ENCODE measurements at regions of chr11 and their contacts with region 1.

Region 1: GRCh38 chr11:115958089-115959000 is 454.1 kb upstream of the CADM1 start:
- DNase-seq: no peak
- ATAC-seq: no peak
- H3K4me3 ChIP-seq: no peak overlapping the region
- H3K27ac ChIP-seq: no peak overlapping the region
- H3K4me1 ChIP-seq: no peaks in the 10 kb centered on the region
- H3K27me3 ChIP-seq: no peaks in the 10 kb centered on the region
- CTCF ChIP-seq: no peak

Region 2: DNA sequence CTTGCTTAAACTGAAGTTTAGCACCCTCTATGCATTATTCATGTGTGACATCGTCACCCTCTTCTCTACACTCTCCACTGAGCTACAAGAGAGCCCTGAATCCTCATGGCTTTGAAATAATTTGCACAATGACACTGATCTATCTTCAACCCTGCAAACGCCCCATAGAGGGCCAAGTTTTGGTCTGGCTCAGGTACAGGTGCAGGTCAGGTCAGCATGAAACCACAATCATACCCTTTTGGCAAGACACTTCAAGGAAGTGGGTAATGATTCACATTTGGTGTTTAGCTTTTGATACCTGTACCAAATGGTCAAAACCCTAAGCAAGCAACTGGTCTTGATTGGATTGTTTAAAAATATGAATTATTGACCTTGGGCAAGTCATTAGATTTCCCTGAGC is 331.9 kb before region 1 on chr11:
- CTCF ChIA-PET with region 1: no interaction called
- POLR2A ChIA-PET with region 1: interaction called, 13 read pairs
- in situ Hi-C with region 1: no loop called
- intact Hi-C with region 1: no loop called
- DNase-seq: no peak
- ATAC-seq: no peak
- H3K4me3 ChIP-seq: no peak overlapping the region
- H3K27ac ChIP-seq: no peak overlapping the region
- H3K4me1 ChIP-seq: no peaks in the 10 kb centered on the region
- H3K27me3 ChIP-seq: no peaks in the 10 kb centered on the region; the same call in 1 of the 2 replicates
- CTCF ChIP-seq: no peak

Region 3: GRCh38 chr11:115896084-115896483 is 62.3 kb before region 1 on chr11:
- CTCF ChIA-PET with region 1: no interaction called
- POLR2A ChIA-PET with region 1: no interaction called
- in situ Hi-C with region 1: no loop called
- intact Hi-C with region 1: no loop called
- DNase-seq: no peak
- ATAC-seq: no peak
- H3K4me3 ChIP-seq: no peak overlapping the region
- H3K27ac ChIP-seq: no peak overlapping the region
- H3K4me1 ChIP-seq: no peaks in the 10 kb centered on the region
- H3K27me3 ChIP-seq: no peaks in the 10 kb centered on the region
- CTCF ChIP-seq: no peak

Region 4: DNA sequence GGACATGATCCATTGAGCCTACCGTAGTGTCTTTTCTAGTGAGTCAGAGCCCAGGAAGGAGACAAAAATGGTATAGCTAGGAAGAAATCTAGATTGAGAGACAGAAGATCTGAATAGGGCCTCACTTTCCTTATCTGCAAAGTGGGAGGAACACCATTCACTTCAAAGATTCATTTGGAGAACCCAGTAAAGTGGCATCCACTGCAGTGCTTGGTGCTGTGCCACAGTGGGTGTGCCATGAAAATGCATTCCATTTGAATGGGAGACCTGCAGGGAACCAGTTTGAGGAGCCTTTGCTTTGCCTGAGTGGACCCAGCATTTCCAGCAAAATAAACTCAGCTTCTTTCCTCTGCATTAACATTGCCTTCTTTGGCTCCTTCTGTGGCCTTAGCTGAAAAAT is 16.4 kb after region 1 on chr11:
- CTCF ChIA-PET with region 1: no interaction called
- POLR2A ChIA-PET with region 1: no interaction called
- in situ Hi-C with region 1: no loop called
- intact Hi-C with region 1: no loop called
- DNase-seq: no peak
- ATAC-seq: no peak
- H3K4me3 ChIP-seq: no peak overlapping the region
- H3K27ac ChIP-seq: no peak overlapping the region
- H3K4me1 ChIP-seq: no peaks in the 10 kb centered on the region
- H3K27me3 ChIP-seq: no peaks in the 10 kb centered on the region
- CTCF ChIP-seq: no peak

Region 5: DNA sequence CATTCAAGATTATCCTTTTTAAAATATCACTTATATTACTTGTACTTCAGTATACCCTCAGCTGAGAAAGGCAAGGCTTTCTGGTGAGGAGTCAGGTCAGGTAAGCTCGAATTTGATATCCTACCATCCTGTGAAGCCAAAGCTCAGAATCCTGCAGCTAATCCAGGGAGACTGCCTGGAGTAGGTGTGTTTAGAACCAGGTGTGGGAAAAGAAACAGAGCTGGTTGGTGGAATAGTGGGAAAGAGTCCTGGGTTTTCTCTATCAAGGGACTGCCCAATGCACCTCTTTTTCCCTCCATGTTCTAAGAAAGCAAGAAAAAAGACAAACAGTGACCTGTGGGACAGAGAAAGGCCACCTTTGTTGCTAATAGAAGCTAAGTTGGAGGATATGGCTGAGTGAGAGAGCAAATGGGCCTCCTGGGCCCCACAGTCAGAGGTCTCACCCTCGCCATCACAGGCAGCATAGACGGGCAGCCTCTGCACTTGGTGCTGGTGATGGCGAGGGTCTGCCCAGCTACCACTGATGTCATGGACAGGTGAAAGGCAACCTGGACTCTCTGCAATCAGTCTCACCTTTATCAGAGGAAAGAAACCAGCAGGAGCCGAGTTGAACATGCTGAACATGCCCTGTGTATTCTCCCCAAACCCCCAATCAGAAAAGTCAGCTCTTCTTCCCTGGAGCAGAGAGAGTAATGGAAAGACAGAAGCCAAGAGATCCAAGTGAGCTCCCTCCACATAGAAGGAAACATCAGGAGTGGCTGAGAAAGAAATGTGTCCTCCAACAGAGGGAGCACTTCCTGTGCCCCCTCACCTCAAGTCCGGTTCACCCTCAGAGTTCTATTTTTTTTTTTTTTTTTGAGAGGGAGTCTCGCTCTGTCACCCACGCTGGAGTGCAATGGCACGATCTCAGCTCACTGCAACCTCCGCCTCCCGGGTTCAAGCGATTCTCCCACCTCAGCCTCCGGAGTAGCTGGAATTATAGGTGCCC is 323.1 kb after region 1 on chr11:
- CTCF ChIA-PET with region 1: no interaction called
- POLR2A ChIA-PET with region 1: no interaction called
- in situ Hi-C with region 1: no loop called
- intact Hi-C with region 1: no loop called
- DNase-seq: no peak
- ATAC-seq: no peak
- H3K4me3 ChIP-seq: no peak overlapping the region
- H3K27ac ChIP-seq: no peak overlapping the region
- H3K4me1 ChIP-seq: 0 out of 2 replicates have a peak, but pooled peaks cover 1% of the 10 kb centered on the region
- H3K27me3 ChIP-seq: peaks cover 2% of the 10 kb centered on the region
- CTCF ChIP-seq: peak; percentile 57